ENCODE measurements at regions of chr1 and their contacts with region 1.

Region 1: GRCh38 chr1:222171005-222171404 is 376.9 kb downstream of the HHIPL2 start:
- DNase-seq: no peak
- H3K4me3 Mint-ChIP-seq: no peak overlapping the region
- H3K27ac Mint-ChIP-seq: no peak overlapping the region
- H3K4me1 Mint-ChIP-seq: no peaks in the 10 kb centered on the region
- H3K27me3 Mint-ChIP-seq: no peaks in the 10 kb centered on the region

Region 2: DNA sequence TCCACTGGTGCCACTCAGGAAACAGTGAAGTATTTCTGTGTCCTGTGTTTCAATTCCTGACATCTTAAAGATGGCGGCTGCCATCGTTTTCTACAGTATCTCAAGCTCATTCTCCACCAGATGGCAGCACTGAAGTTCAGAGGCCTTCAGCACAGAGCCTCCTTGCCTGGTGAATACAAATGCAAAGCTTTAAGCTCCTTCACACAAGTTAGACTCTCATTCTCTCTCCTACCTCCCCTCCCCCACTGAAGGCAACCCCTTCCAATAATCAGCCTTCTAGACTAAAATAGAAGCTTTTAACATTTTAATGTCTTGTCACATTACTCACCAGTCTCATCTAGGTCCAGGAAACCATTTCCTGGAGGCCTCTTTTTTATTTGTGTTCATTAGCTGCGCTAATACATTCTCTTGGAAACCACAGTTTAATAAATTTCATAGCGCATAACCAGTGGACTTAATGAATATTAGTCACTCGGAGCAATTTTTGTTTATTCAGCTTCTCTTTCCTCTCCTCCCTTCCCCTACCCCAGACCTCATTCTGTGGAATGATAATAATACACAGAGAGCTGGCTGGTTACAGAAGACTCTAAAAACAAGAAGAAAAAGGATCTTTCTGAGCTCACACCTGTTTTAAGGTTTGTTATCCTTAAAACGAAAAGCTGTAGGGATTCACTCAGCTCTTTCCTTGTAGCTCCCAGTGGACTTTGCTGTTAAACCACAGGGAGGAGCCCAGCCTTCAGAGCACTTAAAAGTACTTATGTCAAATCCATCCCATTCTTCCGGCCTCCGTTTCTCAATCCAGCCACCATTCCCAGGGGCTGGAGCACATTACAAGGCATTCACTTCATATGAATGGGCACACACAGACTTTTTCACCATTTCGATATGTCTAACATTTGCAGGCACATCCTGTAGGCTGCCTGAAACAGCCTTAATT is 906.9 kb before region 1 on chr1:
- intact Hi-C with region 1: loop called (anchors 5 kb)
- DNase-seq: peak; percentile 1
- H3K4me3 Mint-ChIP-seq: no peak overlapping the region
- H3K27ac Mint-ChIP-seq: no peak overlapping the region
- H3K4me1 Mint-ChIP-seq: no peaks in the 10 kb centered on the region
- H3K27me3 Mint-ChIP-seq: peaks cover 2% of the 10 kb centered on the region

Region 3: DNA sequence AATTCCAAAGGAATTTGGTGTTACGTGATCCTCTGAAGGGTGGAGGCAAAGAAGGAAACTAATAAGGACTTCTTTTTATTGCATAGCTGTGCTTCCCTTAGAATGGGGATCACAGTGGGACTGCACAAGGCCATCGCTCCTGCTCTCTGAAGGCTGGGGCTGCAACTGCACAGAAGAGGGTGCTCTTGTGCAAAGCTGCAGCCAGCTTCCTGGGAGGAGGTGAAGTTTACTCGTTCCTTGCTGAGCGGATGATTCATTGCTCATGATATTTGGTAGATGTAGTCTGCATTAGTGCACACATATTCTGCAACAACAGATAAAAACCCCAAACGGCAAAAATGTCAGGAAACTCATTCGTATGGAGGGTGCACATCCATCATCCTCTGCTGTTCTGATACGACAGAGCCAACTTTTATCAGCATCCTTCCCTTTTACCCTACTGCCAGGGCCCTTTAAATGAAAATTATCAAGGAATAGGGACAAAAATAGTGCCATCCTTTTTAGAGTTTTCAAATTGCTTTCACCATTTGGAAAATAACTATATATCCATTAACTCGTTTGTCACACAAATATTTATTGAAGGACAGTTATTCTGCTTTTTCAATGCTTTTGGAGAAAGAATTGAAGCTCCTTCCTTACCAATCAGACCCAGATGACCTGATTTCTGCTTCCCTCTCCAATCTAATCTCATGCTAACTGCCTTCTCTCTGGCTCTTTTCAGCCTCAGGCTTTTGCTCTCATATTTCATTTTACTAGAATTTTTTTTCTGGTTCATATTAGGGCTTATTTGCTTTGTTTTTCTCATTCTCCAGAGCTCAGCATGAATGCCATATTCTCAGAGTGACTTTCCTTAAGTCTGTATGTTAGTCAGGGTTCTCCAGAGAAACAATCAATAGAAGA is 692.7 kb before region 1 on chr1:
- intact Hi-C with region 1: loop called (anchors 1 kb)
- DNase-seq: peak; percentile 31
- H3K4me3 Mint-ChIP-seq: no peak overlapping the region
- H3K27ac Mint-ChIP-seq: no peak overlapping the region
- H3K4me1 Mint-ChIP-seq: peaks cover 5% of the 10 kb centered on the region
- H3K27me3 Mint-ChIP-seq: peaks cover 5% of the 10 kb centered on the region

Region 4: GRCh38 chr1:222095606-222096475 is 75.2 kb before region 1 on chr1:
- intact Hi-C with region 1: loop called (anchors 5 kb)
- DNase-seq: peak; percentile 25
- H3K4me3 Mint-ChIP-seq: no peak overlapping the region
- H3K27ac Mint-ChIP-seq: no peak overlapping the region
- H3K4me1 Mint-ChIP-seq: no peaks in the 10 kb centered on the region
- H3K27me3 Mint-ChIP-seq: no peaks in the 10 kb centered on the region

Region 5: DNA sequence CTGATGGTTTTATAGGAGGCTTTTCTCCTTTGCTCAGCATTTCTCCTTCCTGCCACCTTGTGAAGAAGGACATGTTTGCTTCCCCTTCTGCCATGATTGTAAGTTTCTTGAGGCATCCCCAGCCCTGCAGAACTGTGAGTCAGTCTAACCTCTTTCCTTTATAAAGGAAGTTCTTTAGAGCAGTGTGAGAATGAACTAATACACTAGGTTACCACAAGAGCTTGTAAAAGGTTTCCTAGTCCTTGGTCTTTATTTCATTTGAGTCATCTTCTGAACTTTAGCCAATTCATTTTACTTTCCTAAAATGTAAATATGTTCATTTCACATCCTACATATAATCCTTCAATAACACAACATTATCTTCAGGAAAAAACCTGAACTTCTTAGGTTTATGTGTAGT is 11.6 kb after region 1 on chr1:
- intact Hi-C with region 1: no loop called
- DNase-seq: no peak
- H3K4me3 Mint-ChIP-seq: no peak overlapping the region
- H3K27ac Mint-ChIP-seq: no peak overlapping the region
- H3K4me1 Mint-ChIP-seq: no peaks in the 10 kb centered on the region
- H3K27me3 Mint-ChIP-seq: no peaks in the 10 kb centered on the region